ENCODE measurements at regions of chr19 and their contacts with region 1.

Region 1: GRCh38 chr19:3336680-3337523 is 29.5 kb upstream of the NFIC start:
- DNase-seq: no peak
- H3K4me3 ChIP-seq: no peak overlapping the region
- CTCF ChIP-seq: no peak

Region 2: DNA sequence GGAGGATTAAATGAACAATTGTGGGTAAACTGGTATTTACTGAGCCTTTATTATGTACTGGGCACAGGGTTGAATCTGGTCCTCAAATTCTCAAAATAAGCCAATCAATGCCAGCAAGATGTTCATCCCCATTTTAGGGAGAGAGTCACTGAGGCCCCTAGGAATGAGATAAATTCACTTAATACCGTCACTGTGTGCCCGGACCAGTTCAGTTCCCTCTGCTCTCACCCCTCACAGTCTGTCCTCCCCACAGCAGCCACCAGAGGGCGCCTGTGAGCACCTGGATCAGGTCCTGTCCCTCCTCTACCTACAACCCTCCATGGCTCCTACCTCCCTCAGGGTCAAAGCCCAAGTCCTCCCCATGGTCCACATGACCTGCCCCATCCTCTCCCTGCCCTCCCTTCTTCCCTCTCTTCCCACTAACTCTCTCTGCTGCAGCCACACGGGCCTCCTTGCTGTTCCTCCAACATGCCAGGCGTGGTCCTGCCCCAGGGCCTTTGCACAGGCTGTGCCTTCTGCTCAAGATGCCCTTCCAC is 12.5 kb before region 1 on chr19:
- CTCF ChIA-PET with region 1: interaction called, 22 read pairs
- POLR2A ChIA-PET with region 1: no interaction called
- DNase-seq: no peak
- H3K4me3 ChIP-seq: no peak overlapping the region
- CTCF ChIP-seq: peak; percentile 78

Measured in AG04449 (cell line).